GM18951 (cell line): ENCODE measurements at regions of chr9 and their contacts with region 1.

Region 1: DNA sequence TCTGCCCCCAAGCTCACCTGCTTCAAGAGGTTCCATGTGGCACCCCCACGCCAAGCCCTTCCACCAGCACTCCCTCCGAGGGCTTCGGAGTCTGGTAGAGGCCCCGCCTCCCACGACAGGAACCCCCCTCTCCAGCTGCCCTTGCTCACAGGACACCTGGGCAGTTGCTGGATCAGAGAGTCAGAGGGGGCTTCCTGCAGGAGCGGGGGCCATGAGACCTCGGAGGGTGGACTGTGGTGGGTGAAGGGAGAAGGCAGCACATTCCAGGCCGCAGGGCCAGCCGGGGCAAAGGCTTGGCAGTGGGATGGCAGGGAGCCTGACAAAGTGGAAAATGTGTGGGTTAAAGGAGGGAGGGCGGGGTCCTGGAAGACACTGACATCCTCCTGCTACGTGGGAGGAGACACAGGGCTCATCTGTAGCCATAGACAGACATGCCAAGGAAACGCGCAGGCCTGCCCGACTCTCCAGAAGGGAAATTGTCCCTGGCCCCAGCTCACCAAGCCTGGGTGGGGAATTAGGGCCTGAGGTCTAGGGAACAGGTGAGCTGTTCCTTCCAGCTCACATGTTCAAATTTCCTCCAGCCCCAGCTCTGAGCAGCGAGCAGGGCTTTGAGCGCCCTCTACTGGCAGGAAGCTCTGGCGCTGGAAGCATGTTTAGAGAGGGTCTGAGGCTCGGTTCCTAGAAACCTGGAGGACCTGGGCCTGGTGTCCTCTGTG is 74.2 kb downstream of the NTNG2 start:
- POLR2A ChIP-seq: no peak

Region 2: DNA sequence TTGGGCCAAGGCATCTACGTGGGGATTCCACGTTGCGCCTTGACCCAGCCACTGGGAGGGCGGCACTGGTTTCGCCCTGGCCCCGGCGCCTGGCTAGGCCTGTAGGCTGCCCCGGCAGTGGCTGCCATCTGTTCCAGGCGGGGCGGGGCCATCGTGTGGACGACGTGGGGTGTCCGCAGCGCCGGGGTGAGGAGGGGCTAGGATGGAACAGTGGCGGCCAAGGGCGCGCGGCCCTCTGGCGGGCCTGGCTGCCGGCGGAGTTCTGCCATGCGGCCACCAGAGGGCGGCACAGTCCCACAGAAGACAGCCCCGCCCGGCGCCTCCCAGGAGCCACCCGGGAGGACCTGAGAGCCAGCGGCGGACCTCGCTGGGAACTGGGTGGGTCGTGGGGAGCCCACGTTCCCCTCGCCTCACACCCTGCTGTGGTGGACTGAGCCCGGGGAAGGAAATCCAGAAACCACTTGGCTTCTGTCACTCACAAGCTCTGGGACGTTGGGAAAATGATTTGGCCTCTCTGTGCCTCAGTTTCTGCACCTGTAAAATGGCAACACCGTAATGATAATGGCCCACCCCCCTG is 473.7 kb before region 1 on chr9:
- in situ Hi-C with region 1: loop called (anchors 10 kb)
- POLR2A ChIP-seq: no peak

Region 3: GRCh38 chr9:132079391-132080091 is 156.6 kb before region 1 on chr9 and contains the start of gene MED27:
- in situ Hi-C with region 1: no loop called
- POLR2A ChIP-seq: peak; percentile 62